ENCODE measurements at regions of chr5 and their contacts with region 1.

Region 1: DNA sequence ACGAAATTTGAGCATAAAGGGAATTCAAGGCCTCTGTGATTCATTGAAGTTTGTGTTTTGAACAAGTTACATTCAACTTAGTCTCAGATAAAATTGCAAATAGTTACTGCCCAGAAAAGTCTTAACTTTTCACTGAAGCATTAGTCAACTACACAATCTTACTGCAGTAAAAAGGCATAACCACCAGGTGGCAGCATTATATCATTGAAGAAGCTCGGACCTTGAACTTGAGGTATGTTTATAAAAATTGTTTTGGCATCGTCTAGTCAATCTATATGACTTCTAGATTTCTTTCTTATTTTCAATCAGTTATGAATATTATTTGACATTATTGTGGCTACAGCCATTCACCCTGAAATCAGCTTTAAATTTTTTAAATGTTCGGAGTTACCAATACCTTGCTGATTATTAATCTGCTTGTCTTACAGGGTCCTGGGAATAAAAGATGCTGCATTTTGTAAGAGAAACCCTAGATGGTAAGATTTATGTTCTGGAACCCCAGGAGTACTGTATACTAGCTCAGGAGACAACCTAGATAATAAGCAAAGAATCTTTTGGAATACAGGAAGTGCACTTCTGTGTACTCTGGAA is 83.9 kb upstream of the GRAMD2B start:
- DNase-seq: peak; percentile 65
- H3K4me3 ChIP-seq: no peak overlapping the region
- H3K27ac ChIP-seq: no peak overlapping the region
- H3K4me1 ChIP-seq: no peaks in the 10 kb centered on the region
- H3K27me3 ChIP-seq: peaks cover 0 to 4% of the 10 kb centered on the region in 2 experiments
- CTCF ChIP-seq: peak; percentile 59 to 64
- POLR2A ChIP-seq: no peak

Region 2: DNA sequence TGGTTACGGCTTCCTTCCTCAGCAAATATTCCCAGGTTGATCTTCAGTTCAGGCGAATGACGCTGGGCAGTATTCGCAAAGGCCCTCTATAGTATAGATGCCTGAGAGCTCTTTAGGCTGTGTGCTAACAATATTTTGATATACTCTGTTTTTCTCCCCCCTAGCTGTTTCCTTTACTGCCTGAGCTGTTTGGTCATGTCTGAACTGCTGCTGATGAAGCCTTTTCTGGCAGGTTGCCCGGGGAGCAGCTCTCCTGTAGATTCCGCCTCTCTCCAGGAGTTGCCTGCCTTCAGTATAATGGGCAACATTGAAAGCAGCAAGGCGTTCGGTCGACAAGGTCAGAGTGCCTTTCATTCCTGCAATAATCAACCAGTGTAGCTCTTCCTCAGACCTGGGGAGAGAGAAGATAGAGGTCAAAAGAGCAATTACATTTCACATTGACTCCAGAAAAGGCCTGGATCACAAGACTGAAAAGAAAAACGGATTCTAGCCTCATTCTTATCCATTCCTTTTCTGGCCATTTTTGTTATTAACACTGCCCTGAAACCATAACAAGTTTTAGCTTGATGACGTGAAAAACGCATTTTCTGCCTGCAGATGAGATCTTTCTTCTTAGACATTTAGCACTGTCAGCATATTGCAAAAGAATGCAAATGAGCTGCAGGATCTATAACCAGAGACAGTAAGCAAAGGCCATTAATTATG is 1532.8 kb before region 1 on chr5:
- CTCF ChIA-PET with region 1: no interaction called
- POLR2A ChIA-PET with region 1: no interaction called
- dilution Hi-C with region 1: no loop called
- intact Hi-C with region 1: no loop called
- DNase-seq: peak; percentile 94
- H3K4me3 ChIP-seq: no peak overlapping the region
- H3K27ac ChIP-seq: no peak overlapping the region
- H3K4me1 ChIP-seq: peaks cover 5% of the 10 kb centered on the region
- H3K27me3 ChIP-seq: no peaks in the 10 kb centered on the region
- CTCF ChIP-seq: no peak
- POLR2A ChIP-seq: no peak

Region 3: DNA sequence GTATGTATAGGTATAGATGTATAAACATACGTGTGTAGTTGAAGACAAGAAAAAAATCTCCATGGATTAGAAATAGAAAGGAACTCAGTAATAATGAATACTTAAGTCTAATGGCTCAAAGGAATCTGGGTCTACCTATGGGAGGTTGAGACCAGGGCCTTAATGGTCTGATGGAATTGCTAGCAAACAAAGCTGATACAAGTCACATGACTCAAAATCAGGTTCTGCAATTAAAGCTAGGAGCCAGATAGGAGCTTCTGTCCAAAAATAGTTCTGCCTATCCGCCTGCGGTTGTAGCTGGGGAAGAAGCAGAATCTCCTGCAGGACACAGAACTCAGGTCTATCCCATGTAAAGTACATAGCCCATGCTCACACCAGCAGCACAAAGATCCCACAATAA is 19.9 kb before region 1 on chr5:
- CTCF ChIA-PET with region 1: no interaction called
- POLR2A ChIA-PET with region 1: no interaction called
- dilution Hi-C with region 1: no loop called
- intact Hi-C with region 1: no loop called
- DNase-seq: no peak
- H3K4me3 ChIP-seq: no peak overlapping the region
- H3K27ac ChIP-seq: no peak overlapping the region
- H3K4me1 ChIP-seq: no peaks in the 10 kb centered on the region
- H3K27me3 ChIP-seq: peaks cover 0 to 4% of the 10 kb centered on the region in 2 experiments
- CTCF ChIP-seq: no peak
- POLR2A ChIP-seq: no peak

Region 4: GRCh38 chr5:126499853-126500342 is 160.6 kb after region 1 on chr5:
- CTCF ChIA-PET with region 1: interaction called, 11 read pairs
- POLR2A ChIA-PET with region 1: no interaction called
- dilution Hi-C with region 1: no loop called
- intact Hi-C with region 1: no loop called
- DNase-seq: peak; percentile 32
- H3K4me3 ChIP-seq: no peak overlapping the region
- H3K27ac ChIP-seq: no peak overlapping the region
- H3K4me1 ChIP-seq: peaks cover 4% of the 10 kb centered on the region
- H3K27me3 ChIP-seq: peaks cover 15 to 22% of the 10 kb centered on the region in 2 experiments
- CTCF ChIP-seq: peak; percentile 41 to 57
- POLR2A ChIP-seq: no peak

Region 5: GRCh38 chr5:126538579-126538978 is 199.3 kb after region 1 on chr5:
- CTCF ChIA-PET with region 1: interaction called, 84 read pairs
- POLR2A ChIA-PET with region 1: no interaction called
- dilution Hi-C with region 1: loop called (anchors 25 kb)
- intact Hi-C with region 1: loop called (anchors 1 kb)
- DNase-seq: no peak
- H3K4me3 ChIP-seq: no peak overlapping the region
- H3K27ac ChIP-seq: no peak overlapping the region
- H3K4me1 ChIP-seq: no peaks in the 10 kb centered on the region
- H3K27me3 ChIP-seq: no peaks in the 10 kb centered on the region
- CTCF ChIP-seq: no peak
- POLR2A ChIP-seq: no peak

Region 6: GRCh38 chr5:126544087-126544740 is 204.9 kb after region 1 on chr5:
- CTCF ChIA-PET with region 1: interaction called, 84 read pairs
- POLR2A ChIA-PET with region 1: no interaction called
- dilution Hi-C with region 1: loop called (anchors 25 kb)
- intact Hi-C with region 1: loop called (anchors 1 kb)
- DNase-seq: peak; percentile 53
- H3K4me3 ChIP-seq: no peak overlapping the region
- H3K27ac ChIP-seq: no peak overlapping the region
- H3K4me1 ChIP-seq: no peaks in the 10 kb centered on the region
- H3K27me3 ChIP-seq: no peaks in the 10 kb centered on the region
- CTCF ChIP-seq: peak; percentile 46 to 66
- POLR2A ChIP-seq: no peak

Region 7: GRCh38 chr5:126594676-126595485 is 255.6 kb after region 1 on chr5 and contains the start of gene ALDH7A1:
- CTCF ChIA-PET with region 1: interaction called, 15 read pairs
- POLR2A ChIA-PET with region 1: no interaction called
- dilution Hi-C with region 1: no loop called
- intact Hi-C with region 1: loop called (anchors 1 kb)
- DNase-seq: peak; percentile 96
- H3K4me3 ChIP-seq: peak within 1 kb of the TSS; percentile 49 to 60 (median 58)
- H3K27ac ChIP-seq: peak within 1 kb of the TSS; percentile 68
- H3K4me1 ChIP-seq: peaks cover 27% of the 10 kb centered on the region
- H3K27me3 ChIP-seq: no peaks in the 10 kb centered on the region
- CTCF ChIP-seq: peak; percentile 58 to 65
- POLR2A ChIP-seq: peak; percentile 94
- total RNA-seq, gene ALDH7A1: 75.7 and 103 TPM in 2 replicates

Region 8: GRCh38 chr5:126600631-126601511 is 261.6 kb after region 1 on chr5 and contains the start of gene PHAX:
- CTCF ChIA-PET with region 1: interaction called, 8 read pairs
- POLR2A ChIA-PET with region 1: no interaction called
- dilution Hi-C with region 1: no loop called
- intact Hi-C with region 1: loop called (anchors 1 kb)
- DNase-seq: peak; percentile 77
- H3K4me3 ChIP-seq: peak within 1 kb of the TSS; percentile 68 to 85 (median 83)
- H3K27ac ChIP-seq: peak within 1 kb of the TSS; percentile 61
- H3K4me1 ChIP-seq: peaks cover 19% of the 10 kb centered on the region
- H3K27me3 ChIP-seq: no peaks in the 10 kb centered on the region
- CTCF ChIP-seq: peak; percentile 82 to 85
- POLR2A ChIP-seq: peak; percentile 88
- total RNA-seq, gene PHAX: 48.2 and 51.2 TPM in 2 replicates

Region 9: GRCh38 chr5:126676195-126676624 is 336.9 kb after region 1 on chr5:
- CTCF ChIA-PET with region 1: no interaction called
- POLR2A ChIA-PET with region 1: no interaction called
- dilution Hi-C with region 1: no loop called
- intact Hi-C with region 1: no loop called
- DNase-seq: peak; percentile 56
- H3K4me3 ChIP-seq: no peak overlapping the region
- H3K27ac ChIP-seq: no peak overlapping the region
- H3K4me1 ChIP-seq: no peaks in the 10 kb centered on the region
- H3K27me3 ChIP-seq: peaks cover 3 to 7% of the 10 kb centered on the region in 2 experiments
- CTCF ChIP-seq: peak; percentile 72 to 75
- POLR2A ChIP-seq: no peak

Measured in endothelial cell of umbilical vein (primary cell).